PC-3 (cell line): ENCODE measurements at regions of chrX and their contacts with region 1.

Region 1: GRCh38 chrX:154986826-154987576 is 35.5 kb downstream of the F8 start:
- DNase-seq: peak; percentile 19
- ATAC-seq: no peak
- H3K4me3 ChIP-seq: no peak overlapping the region
- H3K27ac ChIP-seq: no peak overlapping the region
- H3K4me1 ChIP-seq: no peaks in the 10 kb centered on the region
- H3K27me3 ChIP-seq: no peaks in the 10 kb centered on the region
- CTCF ChIP-seq: peak; percentile 36; the same call in 1 of the 2 replicates

Region 2: DNA sequence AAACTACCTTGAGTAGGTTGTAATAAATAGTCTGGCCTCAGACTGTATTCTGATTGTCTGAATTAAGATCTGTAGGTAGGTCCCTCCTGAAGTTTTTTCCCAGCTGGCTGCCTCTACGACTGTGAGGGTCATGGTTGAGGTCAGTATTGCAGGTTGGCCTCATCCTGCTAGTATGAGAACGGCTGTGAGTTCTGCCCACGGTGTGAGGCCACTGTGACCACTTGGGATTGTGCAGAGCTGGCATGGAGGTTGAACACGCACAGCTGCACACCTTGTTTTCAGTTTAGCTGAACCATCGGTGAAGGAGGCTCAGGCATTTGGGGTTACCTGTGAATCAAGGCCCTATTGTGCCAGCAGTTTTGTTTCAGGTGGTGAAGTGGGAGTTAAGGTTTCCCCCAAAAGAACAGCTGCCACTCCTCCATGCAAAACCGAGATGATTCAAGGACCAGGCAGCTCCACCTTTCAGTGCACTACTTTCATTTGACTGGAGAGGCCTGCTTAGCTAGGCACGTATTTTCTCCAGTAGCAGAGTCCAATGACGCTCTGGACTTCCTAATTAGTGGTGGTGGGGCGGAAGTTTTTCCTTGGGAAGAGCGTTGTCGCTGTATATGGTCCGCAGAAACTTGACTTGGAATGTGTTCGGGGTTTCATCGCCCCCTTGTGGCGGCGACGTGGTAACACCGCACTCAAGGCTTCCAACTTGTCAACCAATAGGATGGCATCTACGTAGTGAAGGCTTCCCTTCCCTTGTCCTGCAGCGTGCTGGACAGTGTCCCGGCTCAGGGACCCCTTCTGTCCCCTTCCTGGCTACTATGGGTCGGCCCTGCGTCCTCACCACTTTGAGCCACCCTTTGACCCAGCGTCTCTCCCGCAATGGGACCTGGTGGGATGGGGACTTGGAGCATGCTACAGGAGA is 70.1 kb after region 1 on chrX:
- CTCF ChIA-PET with region 1: no interaction called
- POLR2A ChIA-PET with region 1: no interaction called
- intact Hi-C with region 1: loop called (anchors 1 kb)
- DNase-seq: peak; percentile 73
- ATAC-seq: peak; percentile 82
- H3K4me3 ChIP-seq: no peak overlapping the region
- H3K27ac ChIP-seq: no peak overlapping the region
- H3K4me1 ChIP-seq: no peaks in the 10 kb centered on the region
- H3K27me3 ChIP-seq: no peaks in the 10 kb centered on the region
- CTCF ChIP-seq: peak; percentile 81